ENCODE measurements at regions of chr12 and their contacts with region 1.

Region 1: DNA sequence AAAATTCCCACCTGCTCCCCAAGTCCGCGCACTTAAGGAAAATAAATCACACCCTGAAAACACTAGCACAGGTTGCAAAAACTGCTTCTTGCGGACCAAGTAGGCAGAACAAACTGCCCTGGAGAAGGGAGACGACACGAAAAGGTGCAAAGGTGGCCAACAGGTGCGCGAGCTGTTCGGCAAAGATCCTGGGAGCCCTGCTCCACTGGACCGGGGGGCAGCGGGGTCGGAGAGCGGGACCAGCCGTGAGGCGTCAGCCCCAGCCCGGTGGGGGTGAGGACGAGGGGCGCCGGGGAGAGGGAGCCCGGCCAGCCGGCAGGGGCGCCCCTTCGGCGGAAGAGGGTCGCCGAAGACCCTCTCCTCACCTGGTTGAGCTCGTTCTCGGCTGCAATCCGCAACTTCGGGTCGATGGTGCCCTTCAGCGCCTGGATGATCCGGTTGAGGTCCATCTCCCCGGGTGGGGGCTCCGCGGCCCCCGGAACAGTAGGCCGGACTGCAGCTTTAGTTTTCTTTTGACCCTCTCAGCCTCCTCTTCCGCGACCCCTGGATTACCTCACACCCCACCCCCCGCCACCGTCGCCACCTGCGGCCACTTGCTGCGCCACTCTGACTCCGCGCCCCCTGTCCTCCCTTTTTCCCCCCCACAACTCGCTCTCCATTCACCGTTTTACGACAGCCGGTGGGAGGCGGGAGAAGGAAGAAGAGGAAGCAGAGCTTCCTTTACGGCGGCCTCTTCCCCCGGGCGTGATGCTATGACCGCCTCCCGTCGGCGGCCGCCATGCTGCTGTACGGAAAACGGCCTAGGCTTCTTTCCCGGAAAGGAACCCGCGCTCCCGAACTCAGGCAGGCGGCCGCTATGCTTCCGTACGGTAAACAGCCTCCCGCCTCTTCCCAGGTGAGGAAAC is at the start of gene IPO8:
- DNase-seq: peak; percentile 96
- H3K4me3 ChIP-seq: peak within 1 kb of the TSS; percentile 89 to 97 (median 92)
- H3K27ac ChIP-seq: peak within 1 kb of the TSS; percentile 83 to 90 (median 86)
- H3K4me1 ChIP-seq: peaks cover 26 to 44% (median 40%) of the 10 kb centered on the region in 4 donors
- H3K27me3 ChIP-seq: no peaks in the 10 kb centered on the region
- CTCF ChIP-seq: peak in 2 of 3 experiments; percentile 19 to 40
- EP300 ChIP-seq: no peak
- POLR2A ChIP-seq: no peak
- total RNA-seq, gene IPO8: 35.0 to 63.6 (median 41.0) TPM

Region 2: GRCh38 chr12:30754709-30755394 is 59.4 kb after region 1 on chr12 and contains the start of gene CAPRIN2:
- intact Hi-C with region 1: loop called (anchors 2 kb)
- DNase-seq: peak; percentile 98
- H3K4me3 ChIP-seq: peak within 1 kb of the TSS; percentile 82 to 93 (median 86)
- H3K27ac ChIP-seq: peak within 1 kb of the TSS; percentile 87 to 90 (median 90)
- H3K4me1 ChIP-seq: peaks cover 14 to 21% (median 18%) of the 10 kb centered on the region in 4 donors
- H3K27me3 ChIP-seq: no peaks in the 10 kb centered on the region
- CTCF ChIP-seq: peak; percentile 36 to 49 (median 42)
- EP300 ChIP-seq: peak; percentile 33
- POLR2A ChIP-seq: no peak
- total RNA-seq, gene CAPRIN2: 21.5 to 44.4 (median 27.9) TPM

Region 3: DNA sequence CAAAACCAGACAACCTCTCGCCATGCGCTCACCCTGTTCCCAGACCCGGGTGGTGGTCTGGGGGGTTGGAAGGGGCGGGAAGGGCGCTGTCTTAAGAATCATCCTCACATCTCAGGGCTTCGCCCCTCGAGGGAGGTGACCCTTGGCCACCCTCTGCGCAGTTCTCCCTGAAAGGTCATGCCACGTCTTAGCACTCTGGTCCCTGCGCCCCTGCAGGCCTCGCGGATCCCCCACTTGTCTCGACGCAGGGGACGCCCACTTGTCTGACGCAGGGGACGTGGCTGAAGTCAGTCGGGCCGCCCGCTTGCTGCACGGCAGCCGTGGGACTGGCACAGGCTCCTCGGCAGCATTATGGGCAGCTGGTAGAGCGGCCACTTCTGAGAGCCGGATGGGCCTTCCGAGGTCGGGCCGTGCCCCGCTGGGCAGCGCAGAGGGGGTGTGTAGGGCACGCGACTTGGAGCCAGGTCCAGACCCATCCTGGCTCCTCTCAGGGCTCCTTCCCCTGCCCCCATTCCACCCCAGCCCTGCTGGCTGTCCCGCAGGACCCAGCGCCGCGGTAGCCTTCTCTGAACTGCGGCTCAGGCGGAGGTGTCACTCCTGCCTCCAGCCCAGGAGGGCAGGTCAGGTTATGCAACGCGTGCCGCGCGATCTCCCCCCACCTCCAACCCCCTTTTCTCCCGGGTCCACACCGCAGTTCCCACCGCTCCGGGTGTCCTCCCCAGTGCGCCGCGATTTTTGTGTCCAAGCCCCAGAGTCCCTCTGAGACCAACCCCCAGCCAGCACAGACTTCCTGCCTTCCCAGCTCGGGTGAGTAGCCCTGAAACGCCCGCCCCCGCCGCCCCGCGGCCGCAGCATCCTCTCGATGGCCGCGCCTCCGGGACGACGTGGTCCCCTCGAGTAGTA is 100.2 kb after region 1 on chr12:
- intact Hi-C with region 1: loop called (anchors 10 kb)
- DNase-seq: no peak
- H3K4me3 ChIP-seq: peak overlapping the region; percentile 60 to 78 (median 65)
- H3K27ac ChIP-seq: peak overlapping the region; percentile 27 to 71 (median 30)
- H3K4me1 ChIP-seq: peaks cover 5 to 24% (median 21%) of the 10 kb centered on the region in 4 donors
- H3K27me3 ChIP-seq: peaks cover 0 to 42% (median 5%) of the 10 kb centered on the region in 4 donors
- CTCF ChIP-seq: peak in 1 of 3 experiments; percentile 29
- EP300 ChIP-seq: no peak
- POLR2A ChIP-seq: no peak

Region 4: GRCh38 chr12:31558521-31558920 is 863.1 kb after region 1 on chr12:
- intact Hi-C with region 1: no loop called
- DNase-seq: no peak
- H3K4me3 ChIP-seq: no peak overlapping the region
- H3K27ac ChIP-seq: no peak overlapping the region
- H3K4me1 ChIP-seq: peaks cover 0 to 6% (median 0%) of the 10 kb centered on the region in 4 donors
- H3K27me3 ChIP-seq: no peaks in the 10 kb centered on the region
- CTCF ChIP-seq: no peak
- EP300 ChIP-seq: no peak
- POLR2A ChIP-seq: no peak

Measured in esophagus muscularis mucosa (tissue), 4 donors.